Panc1 (cell line): ENCODE measurements at regions of chr10 and their contacts with region 1.

Region 1: DNA sequence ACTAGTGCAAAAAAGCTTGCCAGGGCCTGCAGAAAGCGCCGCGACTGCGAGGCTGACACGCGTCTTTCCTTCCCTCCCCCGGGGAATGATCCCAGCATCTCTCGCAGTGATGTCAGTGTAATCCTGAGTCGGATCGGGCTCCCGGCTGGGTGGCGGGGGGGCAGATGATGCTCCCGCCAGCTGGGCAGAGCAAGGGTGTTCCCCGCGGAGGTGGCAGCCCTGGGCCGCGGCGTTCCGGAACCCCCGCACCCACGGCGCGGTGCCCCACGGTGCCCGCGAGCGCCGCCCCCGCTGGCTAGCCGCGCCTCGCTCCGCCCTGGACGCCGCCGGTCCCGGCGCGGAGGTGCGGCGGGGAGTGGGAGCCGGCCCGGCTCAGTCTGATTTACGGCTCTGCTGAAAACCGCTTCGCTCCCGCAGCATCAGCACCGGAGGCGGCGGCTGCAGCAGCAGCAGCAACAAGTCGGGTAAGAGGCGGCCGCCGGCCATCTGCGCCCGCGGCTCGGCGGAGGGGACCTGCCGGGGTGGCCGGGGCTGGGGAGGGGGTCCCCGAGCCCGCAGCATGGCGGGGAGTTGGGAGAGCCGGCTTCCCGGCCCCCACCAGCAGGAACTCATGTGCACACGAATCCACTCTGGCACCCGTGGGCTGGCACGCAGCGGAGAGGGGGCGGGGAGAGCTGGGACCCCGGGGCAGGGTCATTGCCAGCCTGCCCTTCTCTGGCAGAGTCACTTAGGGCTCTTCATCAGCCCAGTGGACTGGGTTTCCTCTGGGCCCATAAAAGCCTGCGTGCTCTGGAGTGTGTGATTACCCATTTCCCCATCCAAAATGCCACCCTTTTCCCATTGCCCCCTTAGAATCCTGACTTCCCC is at the start of gene ZNF365:
- DNase-seq: no peak
- ATAC-seq: peak; percentile 85
- H3K4me3 ChIP-seq: peak within 1 kb of the TSS; percentile 71 to 89
- H3K27ac ChIP-seq: peak within 1 kb of the TSS; percentile 100
- H3K4me1 ChIP-seq: peaks cover 50% of the 10 kb centered on the region
- H3K27me3 ChIP-seq: no peaks in the 10 kb centered on the region
- CTCF ChIP-seq: peak; percentile 26; the same call in 1 of the 2 replicates
- total RNA-seq, gene ZNF365: 22.8 TPM

Region 2: DNA sequence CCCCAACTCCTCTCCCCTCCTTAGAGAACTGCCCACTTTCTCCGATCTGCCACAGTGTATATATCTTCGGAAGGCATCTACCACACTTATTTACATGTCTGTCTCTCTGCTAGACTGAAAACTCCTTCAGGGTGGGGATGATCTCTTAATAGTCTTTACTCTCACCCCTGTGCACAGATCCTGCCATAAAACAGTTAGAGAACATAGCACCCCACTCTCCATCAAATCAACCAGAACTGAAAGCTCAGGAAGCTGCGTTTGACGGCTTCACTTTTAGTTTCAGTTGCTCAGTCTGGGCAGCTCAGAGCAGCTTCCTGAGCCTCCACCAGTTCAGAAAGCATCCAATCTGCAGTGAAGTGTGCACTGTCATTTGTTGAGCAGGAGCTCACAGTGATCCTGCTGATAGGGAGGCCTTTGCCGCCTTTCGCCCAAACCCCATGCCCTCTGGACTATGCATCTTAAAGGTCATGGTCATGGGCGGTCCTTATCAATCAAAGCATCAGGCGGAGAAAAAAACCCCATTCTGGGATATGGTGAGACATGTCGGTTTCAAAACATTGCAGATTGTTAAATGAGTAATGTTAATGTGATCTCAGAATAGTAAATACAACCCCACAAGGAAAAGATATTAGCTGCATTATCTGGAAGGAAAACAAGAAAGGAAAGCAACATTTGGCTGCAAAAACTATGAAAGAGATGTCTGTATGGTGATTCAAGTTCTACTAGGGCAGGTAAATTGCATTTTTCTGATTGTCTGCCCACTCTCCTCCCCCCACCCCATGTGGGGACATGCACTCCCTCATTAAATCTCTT is 263.2 kb after region 1 on chr10:
- CTCF ChIA-PET with region 1: no interaction called
- POLR2A ChIA-PET with region 1: no interaction called
- in situ Hi-C with region 1: no loop called
- intact Hi-C with region 1: no loop called
- DNase-seq: no peak
- ATAC-seq: peak; percentile 76
- H3K4me3 ChIP-seq: 0 out of 4 replicates have a peak overlapping the region, but pooled peaks of 1 of the 2 experiments have one; percentile 0
- H3K27ac ChIP-seq: no peak overlapping the region
- H3K4me1 ChIP-seq: peaks cover 12% of the 10 kb centered on the region
- H3K27me3 ChIP-seq: no peaks in the 10 kb centered on the region
- CTCF ChIP-seq: no peak

Region 3: DNA sequence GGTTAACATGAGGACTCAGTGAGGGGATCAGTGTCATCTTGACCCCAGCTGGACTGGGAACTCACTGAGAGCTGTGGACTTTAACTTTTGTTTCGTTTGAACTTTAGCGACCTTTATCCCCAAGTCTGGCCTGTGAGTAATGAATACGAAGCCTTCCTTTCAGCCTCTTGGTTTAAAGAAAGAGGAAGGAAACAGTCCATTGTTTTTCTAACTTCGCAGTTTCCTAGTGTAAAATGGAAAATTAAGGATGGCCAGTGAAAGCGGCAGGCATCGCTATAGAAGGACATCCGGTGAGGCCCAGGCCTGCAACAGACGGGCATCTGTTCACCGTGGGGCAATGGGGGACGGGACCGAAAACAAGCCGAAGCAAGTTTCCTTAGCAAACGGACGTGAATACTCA is 386.2 kb after region 1 on chr10:
- CTCF ChIA-PET with region 1: interaction called, 11 read pairs
- POLR2A ChIA-PET with region 1: no interaction called
- in situ Hi-C with region 1: no loop called
- intact Hi-C with region 1: no loop called
- DNase-seq: no peak
- ATAC-seq: no peak
- H3K4me3 ChIP-seq: no peak overlapping the region
- H3K27ac ChIP-seq: no peak overlapping the region
- H3K4me1 ChIP-seq: no peaks in the 10 kb centered on the region
- H3K27me3 ChIP-seq: peaks cover 6% of the 10 kb centered on the region; the same call in 1 of the 2 replicates
- CTCF ChIP-seq: no peak